RWPE1 (cell line): ENCODE measurements at regions of chr5 and their contacts with region 1.

Region 1: GRCh38 chr5:141691867-141692532 is 10.0 kb upstream of the ARAP3 start:
- DNase-seq: peak; percentile 84
- H3K27ac ChIP-seq: no peak overlapping the region
- CTCF ChIP-seq: peak; percentile 99

Region 2: DNA sequence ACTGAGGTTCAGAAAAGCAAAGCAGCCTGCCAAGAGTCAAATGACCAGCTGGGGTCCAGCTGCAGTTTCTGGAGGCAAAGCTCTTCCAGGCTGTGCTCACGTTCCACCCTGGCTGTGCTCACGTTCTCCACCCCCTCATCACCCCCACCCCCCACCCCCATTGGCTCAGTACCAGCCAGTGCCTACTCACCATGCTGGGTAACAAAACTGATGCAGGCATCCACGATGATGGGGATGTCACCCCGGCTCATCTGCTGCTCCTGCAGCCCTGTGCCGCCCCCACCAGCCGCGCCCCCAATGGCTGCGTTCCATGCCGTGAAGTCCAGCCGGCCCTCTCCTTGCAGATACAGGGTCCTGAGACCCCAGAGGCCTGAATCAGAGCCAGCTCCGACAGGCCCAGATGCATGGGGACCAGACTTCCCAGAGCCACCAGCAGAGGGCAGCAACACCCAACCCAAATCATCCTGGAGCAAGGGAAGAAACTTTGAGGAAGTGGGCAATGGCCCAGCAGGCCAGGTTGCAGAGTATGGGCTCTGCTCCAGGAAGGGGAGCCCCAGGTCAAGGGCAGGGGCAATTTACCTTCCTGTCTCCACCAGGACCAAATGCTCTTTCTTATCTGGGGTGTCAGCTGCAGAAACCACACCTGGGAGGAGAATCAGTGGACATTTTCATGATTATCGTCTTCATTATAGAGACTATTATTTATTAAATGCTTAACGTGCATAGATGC is 27.1 kb before region 1 on chr5:
- CTCF ChIA-PET with region 1: interaction called, 16 read pairs
- POLR2A ChIA-PET with region 1: no interaction called
- DNase-seq: peak; percentile 73
- H3K27ac ChIP-seq: no peak overlapping the region
- CTCF ChIP-seq: peak; percentile 96

Region 3: GRCh38 chr5:141681695-141682641 is 10.0 kb before region 1 on chr5 and contains the start of gene ARAP3:
- CTCF ChIA-PET with region 1: interaction called, 18 read pairs
- POLR2A ChIA-PET with region 1: no interaction called
- DNase-seq: peak; percentile 95
- H3K27ac ChIP-seq: peak within 1 kb of the TSS; percentile 89
- CTCF ChIP-seq: no peak

Region 4: GRCh38 chr5:141863569-141864457 is 171.8 kb after region 1 on chr5:
- CTCF ChIA-PET with region 1: interaction called, 14 read pairs
- POLR2A ChIA-PET with region 1: no interaction called
- DNase-seq: no peak
- H3K27ac ChIP-seq: no peak overlapping the region
- CTCF ChIP-seq: no peak

Region 5: GRCh38 chr5:141889282-141889871 is 197.4 kb after region 1 on chr5:
- CTCF ChIA-PET with region 1: interaction called, 13 read pairs
- POLR2A ChIA-PET with region 1: no interaction called
- DNase-seq: no peak
- H3K27ac ChIP-seq: no peak overlapping the region
- CTCF ChIP-seq: peak; percentile 54